AG04450 (cell line): ENCODE measurements at regions of chr1 and their contacts with region 1.

Region 1: GRCh38 chr1:212062832-212063438 is 27.4 kb downstream of the DTL start:
- DNase-seq: peak; percentile 13
- H3K4me3 ChIP-seq: no peak overlapping the region
- H3K27ac ChIP-seq: no peak overlapping the region
- H3K27me3 ChIP-seq: no peaks in the 10 kb centered on the region
- CTCF ChIP-seq: peak; percentile 69

Region 2: GRCh38 chr1:211680752-211681327 is 382.1 kb before region 1 on chr1:
- CTCF ChIA-PET with region 1: interaction called, 29 read pairs
- POLR2A ChIA-PET with region 1: no interaction called
- DNase-seq: peak; percentile 79
- H3K4me3 ChIP-seq: no peak overlapping the region
- H3K27ac ChIP-seq: no peak overlapping the region
- H3K27me3 ChIP-seq: peaks cover 6% of the 10 kb centered on the region
- CTCF ChIP-seq: peak; percentile 78

Region 3: DNA sequence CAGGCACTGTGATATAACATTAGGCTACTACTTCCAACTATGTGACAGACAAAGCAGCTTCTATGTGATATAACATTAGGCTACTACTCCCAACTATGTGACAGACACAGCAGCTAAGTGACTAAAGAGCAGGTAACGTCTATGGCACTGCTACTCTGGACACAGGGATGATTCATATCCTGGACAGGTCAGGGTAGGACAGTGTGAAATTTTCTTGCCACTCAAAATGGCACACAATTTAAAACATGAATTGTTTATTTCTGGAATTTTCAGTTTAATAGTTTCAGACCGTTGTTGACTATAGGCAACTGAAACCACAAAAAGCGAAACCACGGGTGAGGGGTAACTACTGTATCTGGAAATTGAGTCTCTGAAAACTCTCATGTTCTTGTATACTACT is 22.3 kb before region 1 on chr1:
- CTCF ChIA-PET with region 1: interaction called, 36 read pairs
- POLR2A ChIA-PET with region 1: no interaction called
- DNase-seq: no peak
- H3K4me3 ChIP-seq: no peak overlapping the region
- H3K27ac ChIP-seq: no peak overlapping the region
- H3K27me3 ChIP-seq: no peaks in the 10 kb centered on the region
- CTCF ChIP-seq: no peak

Region 4: DNA sequence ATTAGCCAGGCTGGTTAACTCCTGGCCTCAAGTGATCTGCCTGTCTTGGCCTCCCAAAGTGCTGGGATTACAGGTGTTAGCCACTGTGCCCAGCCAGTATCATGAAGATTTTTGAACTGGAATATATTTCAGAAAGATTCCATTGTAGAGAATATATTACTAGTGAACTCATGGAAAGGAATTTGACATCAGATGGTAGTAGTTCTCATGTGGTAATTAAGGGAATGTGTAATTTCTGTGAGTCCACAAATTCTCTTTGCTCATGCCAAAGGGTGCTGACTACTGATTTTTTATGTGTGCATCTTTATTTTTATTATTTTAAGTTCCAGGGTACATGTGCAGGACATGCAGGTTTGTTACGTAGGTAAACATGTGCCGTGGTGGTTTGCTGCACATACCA is 17.0 kb before region 1 on chr1:
- CTCF ChIA-PET with region 1: interaction called, 14 read pairs
- POLR2A ChIA-PET with region 1: no interaction called
- DNase-seq: no peak
- H3K4me3 ChIP-seq: no peak overlapping the region
- H3K27ac ChIP-seq: no peak overlapping the region
- H3K27me3 ChIP-seq: no peaks in the 10 kb centered on the region
- CTCF ChIP-seq: no peak

Region 5: DNA sequence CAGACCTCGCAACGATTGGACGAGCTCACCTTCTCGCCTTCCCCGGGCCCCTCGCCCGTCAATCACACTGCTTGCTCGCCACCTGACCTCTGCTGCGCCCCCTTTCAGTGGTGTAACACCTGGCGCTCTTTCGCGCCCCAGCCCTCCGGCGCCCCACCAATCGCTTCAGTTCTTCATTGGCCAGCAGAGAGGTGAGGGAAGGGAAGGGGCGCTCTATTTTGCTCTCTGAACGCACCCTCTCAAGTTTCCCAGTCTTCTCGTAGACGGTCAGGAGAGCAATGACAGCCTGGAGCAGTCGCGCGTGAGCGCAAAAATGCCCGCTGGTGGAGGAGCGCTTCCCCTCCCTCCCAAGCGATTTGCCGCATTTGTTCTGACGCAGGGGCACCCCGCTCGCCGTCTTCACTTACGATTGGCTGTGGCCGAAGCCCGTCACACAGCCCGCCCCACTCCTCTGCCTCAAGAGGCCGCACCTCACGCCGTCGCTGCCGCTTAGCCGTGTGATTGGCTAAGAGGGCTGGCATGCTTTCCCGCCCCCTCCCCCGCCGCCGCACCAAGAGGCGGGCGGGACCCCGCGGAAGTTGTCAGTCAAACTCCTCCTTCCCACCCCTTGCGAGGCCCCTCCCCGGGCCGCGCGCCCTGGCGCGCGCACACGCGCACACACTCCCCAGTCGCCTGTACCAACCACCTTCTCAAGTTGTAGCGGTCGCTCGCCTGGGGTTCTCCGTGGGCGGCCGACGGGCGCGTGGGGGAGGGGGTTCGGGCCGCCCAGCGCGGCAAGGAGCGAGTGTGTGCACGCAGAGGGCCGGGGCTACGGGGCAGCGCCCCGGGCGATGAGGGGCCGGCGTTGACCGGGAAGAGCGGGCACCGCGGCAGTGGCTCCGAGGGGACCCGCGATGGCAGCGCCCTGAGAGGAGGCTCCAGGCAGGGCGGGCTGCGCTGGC is 222.1 kb after region 1 on chr1 and contains the start of gene PPP2R5A:
- CTCF ChIA-PET with region 1: interaction called, 11 read pairs
- POLR2A ChIA-PET with region 1: no interaction called
- DNase-seq: peak; percentile 99
- H3K4me3 ChIP-seq: peak within 1 kb of the TSS; percentile 92
- H3K27ac ChIP-seq: peak within 1 kb of the TSS; percentile 77
- H3K27me3 ChIP-seq: no peaks in the 10 kb centered on the region
- CTCF ChIP-seq: peak; percentile 23; the same call in 1 of the 2 replicates
- polyA plus RNA-seq, gene PPP2R5A: 23.0 and 31.5 TPM in 2 replicates

Region 6: GRCh38 chr1:212291505-212292134 is 228.7 kb after region 1 on chr1:
- CTCF ChIA-PET with region 1: interaction called, 13 read pairs
- POLR2A ChIA-PET with region 1: no interaction called
- DNase-seq: no peak
- H3K4me3 ChIP-seq: no peak overlapping the region
- H3K27ac ChIP-seq: no peak overlapping the region
- H3K27me3 ChIP-seq: no peaks in the 10 kb centered on the region
- CTCF ChIP-seq: peak; percentile 75

Region 7: DNA sequence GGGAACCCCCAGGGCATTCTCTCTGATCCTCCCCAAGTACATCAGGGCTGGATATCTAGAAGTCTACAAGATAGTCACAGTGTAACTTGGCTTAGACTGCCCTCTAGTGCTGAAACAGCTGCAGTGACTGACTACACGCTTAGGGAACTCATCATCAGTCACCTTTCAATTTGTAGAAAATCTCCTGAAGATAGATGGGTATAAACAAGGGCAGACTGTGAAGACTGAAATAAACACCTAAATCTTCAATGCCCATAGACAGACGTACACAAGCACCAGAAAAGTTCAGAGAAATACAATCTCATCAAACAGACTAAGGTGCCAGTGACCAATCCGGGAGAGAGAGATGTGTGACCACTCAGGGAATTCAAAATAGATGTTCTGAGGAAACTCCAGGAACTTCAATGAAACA is 305.1 kb after region 1 on chr1:
- CTCF ChIA-PET with region 1: interaction called, 99 read pairs
- POLR2A ChIA-PET with region 1: no interaction called
- DNase-seq: peak; percentile 47
- H3K4me3 ChIP-seq: no peak overlapping the region
- H3K27ac ChIP-seq: no peak overlapping the region
- H3K27me3 ChIP-seq: no peaks in the 10 kb centered on the region
- CTCF ChIP-seq: peak; percentile 95